ENCODE measurements at regions of chr1 and their contacts with region 1.

Region 1: GRCh38 chr1:204213668-204214662 is at the start of gene GOLT1A:
- DNase-seq: peak; percentile 66 to 98
- H3K4me3 ChIP-seq: peak within 1 kb of the TSS; percentile 47 to 69 (median 61)
- H3K27ac ChIP-seq: 0 out of 2 replicates have a peak within 1 kb of the TSS, but pooled peaks have one; percentile 11
- H3K4me1 ChIP-seq: peaks cover 0 to 3% (median 2%) of the 10 kb centered on the region in 4 experiments; a peak in 4 of 7 replicates
- H3K27me3 ChIP-seq: no peaks in the 10 kb centered on the region
- CTCF ChIP-seq: peak; percentile 57 to 87 (median 84)
- EP300 ChIP-seq: no peak
- POLR2A ChIP-seq: peak in 1 of 2 experiments; percentile 14; a peak in 1 of 3 replicates
- RAD21 ChIP-seq: peak; percentile 85 to 89
- total RNA-seq, gene GOLT1A: 6.9 and 7.5 TPM in 2 replicates

Region 2: DNA sequence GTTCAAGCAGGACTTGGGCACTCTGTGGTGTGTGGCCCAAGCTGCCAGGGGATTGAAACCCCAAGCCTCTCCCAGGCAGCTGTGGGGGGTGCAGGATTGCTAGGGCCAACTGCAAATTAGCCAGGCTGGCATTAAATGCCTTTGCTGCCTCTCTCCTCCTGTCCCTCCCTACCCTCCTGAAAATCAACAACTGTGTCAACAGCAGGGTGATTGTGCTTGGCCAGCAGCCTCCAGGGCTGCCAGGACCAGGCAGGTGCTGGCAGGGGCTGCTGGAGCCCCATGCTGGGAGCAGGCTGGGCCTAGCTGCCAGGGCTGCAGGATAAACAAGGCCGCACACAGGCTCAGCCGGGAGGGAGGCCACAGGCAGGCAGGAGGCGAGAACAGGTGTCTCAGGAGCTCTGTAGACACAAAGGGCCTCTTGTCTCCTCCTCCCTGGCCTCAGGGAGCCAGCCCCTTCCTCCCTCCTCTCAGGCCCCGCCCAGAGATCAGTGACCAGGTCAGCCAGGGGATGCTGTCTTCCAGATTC is 129.7 kb before region 1 on chr1:
- CTCF ChIA-PET with region 1: no interaction called
- POLR2A ChIA-PET with region 1: no interaction called
- DNase-seq: peak; percentile 87 to 88
- H3K4me3 ChIP-seq: no peak overlapping the region
- H3K27ac ChIP-seq: peak overlapping the region; percentile 82
- H3K4me1 ChIP-seq: peaks cover 44 to 71% (median 63%) of the 10 kb centered on the region in 4 experiments
- H3K27me3 ChIP-seq: no peaks in the 10 kb centered on the region
- CTCF ChIP-seq: no peak
- EP300 ChIP-seq: peak; percentile 39 to 89; a peak in 2 of 3 replicates
- POLR2A ChIP-seq: peak in 1 of 2 experiments; percentile 46; a peak in 1 of 3 replicates
- RAD21 ChIP-seq: peak; percentile 9 to 42; a peak in 2 of 4 replicates

Region 3: GRCh38 chr1:204198151-204198994 is 15.6 kb before region 1 on chr1:
- CTCF ChIA-PET with region 1: interaction called, 19 read pairs
- POLR2A ChIA-PET with region 1: interaction called, 6 read pairs
- DNase-seq: peak in 1 of 2 experiments; percentile 29
- H3K4me3 ChIP-seq: no peak overlapping the region
- H3K27ac ChIP-seq: no peak overlapping the region
- H3K4me1 ChIP-seq: peaks cover 0 to 5% (median 0%) of the 10 kb centered on the region in 4 experiments; a peak in 3 of 7 replicates
- H3K27me3 ChIP-seq: no peaks in the 10 kb centered on the region
- CTCF ChIP-seq: peak in 1 of 3 experiments; percentile 4; a peak in 2 of 4 replicates
- EP300 ChIP-seq: no peak
- POLR2A ChIP-seq: no peak
- RAD21 ChIP-seq: peak; percentile 16 to 29; a peak in 2 of 4 replicates

Region 4: GRCh38 chr1:204286831-204287421 is 73.0 kb after region 1 on chr1:
- CTCF ChIA-PET with region 1: interaction called, 12 read pairs
- POLR2A ChIA-PET with region 1: interaction called, 3 read pairs
- DNase-seq: no peak
- H3K4me3 ChIP-seq: 0 out of 8 replicates have a peak overlapping the region, but pooled peaks of 1 of the 4 experiments have one; percentile 42
- H3K27ac ChIP-seq: no peak overlapping the region
- H3K4me1 ChIP-seq: peaks cover 8 to 22% (median 16%) of the 10 kb centered on the region in 4 experiments
- H3K27me3 ChIP-seq: no peaks in the 10 kb centered on the region
- CTCF ChIP-seq: no peak
- EP300 ChIP-seq: no peak
- POLR2A ChIP-seq: no peak
- RAD21 ChIP-seq: no peak

Region 5: GRCh38 chr1:204350857-204351573 is 137.1 kb after region 1 on chr1:
- CTCF ChIA-PET with region 1: interaction called, 17 read pairs
- POLR2A ChIA-PET with region 1: no interaction called
- DNase-seq: peak in 1 of 2 experiments; percentile 99
- H3K4me3 ChIP-seq: peak overlapping the region in 1 of 4 experiments; percentile 44; a peak in 3 of 8 replicates
- H3K27ac ChIP-seq: no peak overlapping the region
- H3K4me1 ChIP-seq: peaks cover 6 to 18% (median 14%) of the 10 kb centered on the region in 4 experiments
- H3K27me3 ChIP-seq: no peaks in the 10 kb centered on the region
- CTCF ChIP-seq: no peak
- EP300 ChIP-seq: peak in 1 of 2 experiments; percentile 76; a peak in 1 of 3 replicates
- POLR2A ChIP-seq: no peak
- RAD21 ChIP-seq: no peak

Region 6: DNA sequence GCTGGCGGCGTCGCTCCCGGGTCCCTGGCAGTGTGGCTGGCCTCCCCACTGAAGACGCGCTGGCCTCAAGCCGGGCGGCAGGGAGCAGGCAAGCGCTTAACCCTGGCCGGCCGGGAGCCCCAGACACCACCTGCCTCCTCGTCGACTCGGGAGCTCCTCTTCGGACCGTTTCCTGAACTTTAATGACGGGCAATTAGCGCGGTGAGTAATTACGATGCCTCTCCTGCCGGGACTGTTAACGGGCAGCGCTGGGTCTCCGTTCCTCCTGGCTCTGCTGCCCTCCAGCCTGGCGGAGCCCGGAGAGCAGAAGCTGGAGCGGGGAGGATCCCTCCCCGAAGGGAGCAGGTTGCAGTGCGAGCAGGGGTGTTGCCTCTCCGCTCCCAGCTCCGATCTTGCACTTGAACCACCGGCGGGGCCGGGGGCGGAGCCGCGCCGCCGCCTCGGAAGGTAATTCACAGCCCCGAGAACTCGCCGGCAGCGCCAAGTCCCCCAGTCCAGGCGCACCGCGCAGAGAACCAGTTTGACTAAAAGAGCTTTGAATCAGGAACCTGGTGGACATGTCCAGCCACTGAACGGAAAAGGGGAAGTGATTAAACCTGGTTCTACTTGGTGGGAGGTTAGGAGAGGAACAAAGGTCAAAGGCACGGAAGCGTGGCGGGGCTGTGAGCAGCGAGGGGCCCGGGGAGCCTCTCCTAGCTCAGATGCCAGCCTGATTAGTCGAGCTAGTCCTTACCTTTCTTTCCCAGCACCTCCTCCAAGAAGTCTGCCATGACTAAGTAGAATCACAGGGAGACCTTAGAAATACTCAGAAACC is 164.0 kb after region 1 on chr1:
- CTCF ChIA-PET with region 1: interaction called, 19 read pairs
- POLR2A ChIA-PET with region 1: interaction called, 4 read pairs
- DNase-seq: peak in 1 of 2 experiments; percentile 92
- H3K4me3 ChIP-seq: peak overlapping the region; percentile 46 to 87 (median 67)
- H3K27ac ChIP-seq: no peak overlapping the region
- H3K4me1 ChIP-seq: peaks cover 0 to 4% (median 1%) of the 10 kb centered on the region in 4 experiments; a peak in 6 of 7 replicates
- H3K27me3 ChIP-seq: peaks cover 5 to 52% (median 27%) of the 10 kb centered on the region in 4 experiments
- CTCF ChIP-seq: no peak
- EP300 ChIP-seq: no peak
- POLR2A ChIP-seq: peak in 1 of 2 experiments; percentile 25; a peak in 1 of 3 replicates
- RAD21 ChIP-seq: no peak

Measured in H1 (cell line).